Stomach (tissue), 19 donors: ENCODE measurements at regions of chr11 and their contacts with region 1.

Region 1: DNA sequence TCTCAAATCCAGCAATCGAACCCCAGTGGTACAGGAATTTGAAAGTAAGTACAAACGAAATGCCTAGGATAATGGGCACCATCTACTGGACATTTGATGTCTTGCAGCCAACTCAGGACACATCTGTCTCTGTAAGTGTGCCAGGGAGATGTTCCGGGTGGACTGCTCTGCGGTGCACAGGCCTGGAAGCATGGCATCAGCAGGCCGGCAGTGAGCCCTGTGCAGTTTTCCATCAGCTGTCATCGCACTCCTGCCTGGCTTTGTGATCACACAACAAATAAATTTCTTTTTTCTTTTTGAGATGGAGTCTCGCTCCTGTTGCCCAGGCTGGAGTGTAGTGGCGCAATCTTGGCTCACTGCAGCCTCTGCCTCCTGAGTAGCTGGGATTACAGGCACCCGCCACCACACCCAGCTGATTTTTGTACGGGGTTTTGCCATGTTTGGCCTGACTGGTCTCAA is 71.0 kb downstream of the JAM3 start:
- DNase-seq: peak; percentile 55 to 90
- H3K4me3 ChIP-seq: no peak overlapping the region
- H3K27ac ChIP-seq: peak overlapping the region in 3 of 5 donors; percentile 18 to 66 (median 54)
- H3K4me1 ChIP-seq: peaks cover 0 to 14% (median 4%) of the 10 kb centered on the region in 4 donors
- H3K27me3 ChIP-seq: no peaks in the 10 kb centered on the region
- CTCF ChIP-seq: peak in 5 of 7 experiments; percentile 75 to 87 (median 77)
- EP300 ChIP-seq: no peak
- POLR2A ChIP-seq: no peak

Region 2: GRCh38 chr11:133934599-133935550 is 205.0 kb before region 1 on chr11:
- intact Hi-C with region 1: loop called (anchors 5 kb)
- DNase-seq: peak in 1 of 2 donors; percentile 76
- H3K4me3 ChIP-seq: no peak overlapping the region
- H3K27ac ChIP-seq: no peak overlapping the region
- H3K4me1 ChIP-seq: peaks cover 0 to 9% (median 3%) of the 10 kb centered on the region in 4 donors
- H3K27me3 ChIP-seq: no peaks in the 10 kb centered on the region
- CTCF ChIP-seq: no peak
- EP300 ChIP-seq: no peak
- POLR2A ChIP-seq: no peak

Region 3: GRCh38 chr11:134050541-134051383 is 89.1 kb before region 1 on chr11:
- intact Hi-C with region 1: loop called (anchors 5 kb)
- DNase-seq: peak; percentile 64 to 92
- H3K4me3 ChIP-seq: peak overlapping the region; percentile 18 to 32 (median 29)
- H3K27ac ChIP-seq: peak overlapping the region in 3 of 5 donors; percentile 15 to 74 (median 74)
- H3K4me1 ChIP-seq: peaks cover 6 to 31% (median 16%) of the 10 kb centered on the region in 4 donors
- H3K27me3 ChIP-seq: peaks cover 0 to 25% (median 18%) of the 10 kb centered on the region in 3 donors
- CTCF ChIP-seq: peak in 5 of 7 experiments; percentile 85 to 94 (median 88)
- EP300 ChIP-seq: no peak
- POLR2A ChIP-seq: no peak